SK-N-SH (cell line): ENCODE measurements at regions of chr20 and their contacts with region 1.

Region 1: GRCh38 chr20:32762149-32762753 is at the start of gene DNMT3B:
- DNase-seq: peak; percentile 99
- H3K4me3 ChIP-seq: peak within 1 kb of the TSS; percentile 72 to 86
- H3K27ac ChIP-seq: peak within 1 kb of the TSS in 1 of 2 experiments; percentile 8; a peak in 1 of 4 replicates
- H3K4me1 ChIP-seq: peaks cover 0 to 12% of the 10 kb centered on the region in 2 experiments; a peak in 2 of 4 replicates
- H3K27me3 ChIP-seq: no peaks in the 10 kb centered on the region
- CTCF ChIP-seq: peak; percentile 28
- EP300 ChIP-seq: peak in 1 of 2 experiments; percentile 45; a peak in 1 of 4 replicates
- RAD21 ChIP-seq: peak; percentile 26; the same call in 1 of the 2 replicates
- polyA plus RNA-seq, gene DNMT3B: 2.2 and 2.4 TPM in 2 replicates

Region 2: GRCh38 chr20:32585011-32585518 is 177.2 kb before region 1 on chr20 and contains the start of gene NOL4L:
- CTCF ChIA-PET with region 1: no interaction called
- POLR2A ChIA-PET with region 1: no interaction called
- DNase-seq: peak; percentile 81
- H3K4me3 ChIP-seq: peak within 1 kb of the TSS; percentile 59 to 60
- H3K27ac ChIP-seq: peak within 1 kb of the TSS in 1 of 2 experiments; percentile 64; a peak in 1 of 4 replicates
- H3K4me1 ChIP-seq: peaks cover 0 to 25% of the 10 kb centered on the region in 2 experiments; a peak in 1 of 4 replicates
- H3K27me3 ChIP-seq: peaks cover 15% of the 10 kb centered on the region; the same call in 1 of the 2 replicates
- CTCF ChIP-seq: no peak
- EP300 ChIP-seq: no peak
- RAD21 ChIP-seq: no peak
- polyA plus RNA-seq, gene NOL4L: 10.4 and 14.3 TPM in 2 replicates

Region 3: DNA sequence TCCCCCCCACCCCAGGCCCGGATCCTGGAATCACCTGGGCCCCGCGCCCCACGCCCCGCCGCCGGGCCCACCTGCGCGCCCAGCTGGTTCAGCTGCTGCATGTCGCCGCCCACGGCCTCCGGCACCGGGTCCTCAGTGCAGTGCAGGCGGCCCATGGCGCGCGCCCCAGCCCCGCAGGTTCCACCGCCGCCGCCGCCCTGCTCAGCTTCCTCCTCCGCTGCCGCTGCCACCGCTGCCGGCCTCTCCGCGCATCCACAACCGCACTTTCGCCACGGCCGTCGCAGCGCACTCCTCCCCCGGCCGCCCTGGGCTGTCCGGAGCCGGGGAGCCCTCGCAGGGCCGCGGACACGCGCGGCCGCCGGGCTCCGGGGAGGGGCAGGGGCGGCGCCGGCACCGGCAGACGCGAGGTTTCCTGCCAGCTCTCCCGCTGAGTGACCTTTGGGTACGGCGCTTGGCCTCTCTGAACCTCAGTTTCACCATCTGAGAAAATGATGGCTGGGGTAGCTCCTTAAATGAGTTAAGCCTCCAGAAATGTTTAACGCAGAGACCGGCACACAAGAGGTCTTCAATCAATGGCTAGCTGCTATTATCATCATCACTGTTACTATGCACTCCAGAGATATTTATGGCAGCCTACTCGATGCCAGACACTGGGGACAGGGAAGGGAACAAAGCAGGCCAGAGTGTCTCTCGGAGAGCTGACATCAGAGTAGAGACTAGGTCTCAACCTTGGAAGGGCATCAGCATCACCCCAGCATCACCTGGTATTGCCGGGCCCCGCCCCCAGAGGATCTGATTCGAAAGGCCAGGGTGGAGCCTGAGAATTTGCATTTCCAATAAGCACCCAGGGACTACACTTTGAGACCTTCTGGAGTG is 18.8 kb before region 1 on chr20 and contains the start of gene COMMD7:
- CTCF ChIA-PET with region 1: interaction called, 14 read pairs
- POLR2A ChIA-PET with region 1: interaction called, 11 read pairs
- DNase-seq: peak; percentile 86
- H3K4me3 ChIP-seq: peak within 1 kb of the TSS; percentile 59 to 78
- H3K27ac ChIP-seq: peak within 1 kb of the TSS; percentile 29 to 56; a peak in 3 of 4 replicates
- H3K4me1 ChIP-seq: peaks cover 8 to 13% of the 10 kb centered on the region in 2 experiments; a peak in 1 of 4 replicates
- H3K27me3 ChIP-seq: no peaks in the 10 kb centered on the region
- CTCF ChIP-seq: no peak
- EP300 ChIP-seq: peak in 1 of 2 experiments; percentile 56; a peak in 1 of 4 replicates
- RAD21 ChIP-seq: no peak
- polyA plus RNA-seq, gene COMMD7: 38.0 and 46.0 TPM in 2 replicates

Region 4: GRCh38 chr20:32819992-32820710 is 57.9 kb after region 1 on chr20:
- CTCF ChIA-PET with region 1: no interaction called
- POLR2A ChIA-PET with region 1: interaction called, 10 read pairs
- DNase-seq: peak; percentile 93
- H3K4me3 ChIP-seq: peak overlapping the region; percentile 80 to 82
- H3K27ac ChIP-seq: peak overlapping the region; percentile 67 to 73
- H3K4me1 ChIP-seq: peaks cover 19 to 24% of the 10 kb centered on the region in 2 experiments; a peak in 2 of 4 replicates
- H3K27me3 ChIP-seq: no peaks in the 10 kb centered on the region
- CTCF ChIP-seq: 0 out of 2 replicates have a peak, but pooled peaks have one; percentile 10
- EP300 ChIP-seq: no peak
- RAD21 ChIP-seq: no peak